ENCODE measurements at regions of chr16 and their contacts with region 1.

Region 1: GRCh38 chr16:50568187-50568830 is 20.1 kb downstream of the NKD1 start:
- DNase-seq: no peak
- ATAC-seq: no peak
- H3K4me3 ChIP-seq: no peak overlapping the region
- H3K27ac ChIP-seq: no peak overlapping the region
- H3K4me1 ChIP-seq: peaks cover 0 to 12% (median 0%) of the 10 kb centered on the region in 12 donors
- H3K27me3 ChIP-seq: peaks cover 0 to 3% (median 0%) of the 10 kb centered on the region in 9 donors
- CTCF ChIP-seq: no peak
- POLR2A ChIP-seq: no peak

Region 2: DNA sequence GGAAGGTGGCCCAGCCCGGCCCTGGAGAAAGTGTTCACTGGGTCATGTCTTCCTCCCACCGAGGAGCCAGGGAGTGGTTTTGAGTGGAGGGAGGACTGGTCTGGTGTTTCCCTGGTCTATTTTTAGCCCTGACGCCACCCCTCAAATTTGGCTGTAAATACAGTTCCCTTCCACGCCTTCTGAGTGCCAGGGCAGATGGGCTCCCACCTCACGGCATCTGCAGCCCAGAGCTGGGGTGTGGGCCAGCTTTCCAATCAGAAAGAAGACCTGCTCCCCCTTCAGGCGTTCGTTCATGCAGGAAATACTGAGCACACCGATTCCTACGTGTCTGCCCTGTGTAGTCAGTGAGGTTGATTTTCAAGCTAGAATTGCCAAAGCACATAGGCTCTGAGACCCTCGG is 59.1 kb after region 1 on chr16:
- intact Hi-C with region 1: loop called in 1 of 10 experiments (anchors 10 kb)
- DNase-seq: peak in 4 of 5 donors; percentile 52 to 74 (median 66)
- ATAC-seq: peak; percentile 79 to 90 (median 86)
- H3K4me3 ChIP-seq: no peak overlapping the region
- H3K27ac ChIP-seq: peak overlapping the region in 1 of 12 donors; percentile 36
- H3K4me1 ChIP-seq: peaks cover 0 to 12% (median 8%) of the 10 kb centered on the region in 12 donors
- H3K27me3 ChIP-seq: no peaks in the 10 kb centered on the region
- CTCF ChIP-seq: peak in 10 of 12 donors; percentile 16 to 59 (median 41)
- POLR2A ChIP-seq: no peak